Naive thymus-derived CD4-positive, alpha-beta T cell (primary cell): ENCODE measurements at regions of chr2 and their contacts with region 1.

Region 1: GRCh38 chr2:88055371-88056128 is at the start of gene KRCC1:
- DNase-seq: peak; percentile 91 to 95 (median 93)
- ATAC-seq: peak; percentile 96
- H3K4me3 ChIP-seq: peak within 1 kb of the TSS; percentile 75
- H3K4me3 Mint-ChIP-seq: peak within 1 kb of the TSS; percentile 89 to 97 (median 92)
- H3K27ac ChIP-seq: peak within 1 kb of the TSS; percentile 96
- H3K27ac Mint-ChIP-seq: peak within 1 kb of the TSS; percentile 92 to 100 (median 97)
- H3K4me1 ChIP-seq: peaks cover 13 to 26% of the 10 kb centered on the region in 2 donors
- H3K4me1 Mint-ChIP-seq: peaks cover 33 to 65% (median 54%) of the 10 kb centered on the region in 7 donors
- H3K27me3 ChIP-seq: no peaks in the 10 kb centered on the region
- H3K27me3 Mint-ChIP-seq: no peaks in the 10 kb centered on the region
- total RNA-seq, gene KRCC1: 7.1 to 33.9 (median 29.3) TPM

Region 2: GRCh38 chr2:86562922-86563649 is 1492.5 kb before region 1 on chr2 and contains the start of gene CHMP3:
- CTCF ChIA-PET with region 1: no interaction called
- POLR2A ChIA-PET with region 1: no interaction called
- intact Hi-C with region 1: loop called in 1 of 2 experiments (anchors 5 kb)
- DNase-seq: peak; percentile 95 to 98 (median 96)
- ATAC-seq: peak; percentile 94
- H3K4me3 ChIP-seq: peak within 1 kb of the TSS; percentile 72
- H3K4me3 Mint-ChIP-seq: peak within 1 kb of the TSS in 9 of 10 donors; percentile 95 to 99 (median 97)
- H3K27ac ChIP-seq: peak within 1 kb of the TSS; percentile 99
- H3K27ac Mint-ChIP-seq: peak within 1 kb of the TSS; percentile 96 to 100 (median 98)
- H3K4me1 ChIP-seq: peaks cover 11 to 25% of the 10 kb centered on the region in 2 donors
- H3K4me1 Mint-ChIP-seq: peaks cover 11 to 42% (median 29%) of the 10 kb centered on the region in 7 donors
- H3K27me3 ChIP-seq: no peaks in the 10 kb centered on the region
- H3K27me3 Mint-ChIP-seq: peaks cover 0 to 7% (median 0%) of the 10 kb centered on the region in 5 donors
- total RNA-seq, gene CHMP3: 39.9 to 103 (median 71.4) TPM

Region 3: GRCh38 chr2:88036182-88036581 is 19.4 kb before region 1 on chr2:
- CTCF ChIA-PET with region 1: interaction called, 8 read pairs
- POLR2A ChIA-PET with region 1: interaction called, 4 read pairs
- intact Hi-C with region 1: loop called in 1 of 2 experiments (anchors 2 kb)
- DNase-seq: no peak
- ATAC-seq: no peak
- H3K4me3 ChIP-seq: no peak overlapping the region
- H3K4me3 Mint-ChIP-seq: no peak overlapping the region
- H3K27ac ChIP-seq: no peak overlapping the region
- H3K27ac Mint-ChIP-seq: peak overlapping the region in 1 of 9 donors; percentile 48
- H3K4me1 ChIP-seq: no peaks in the 10 kb centered on the region
- H3K4me1 Mint-ChIP-seq: peaks cover 5 to 50% (median 34%) of the 10 kb centered on the region in 7 donors
- H3K27me3 ChIP-seq: no peaks in the 10 kb centered on the region
- H3K27me3 Mint-ChIP-seq: no peaks in the 10 kb centered on the region

Region 4: GRCh38 chr2:88187038-88187676 is 131.6 kb after region 1 on chr2:
- CTCF ChIA-PET with region 1: no interaction called
- POLR2A ChIA-PET with region 1: no interaction called
- intact Hi-C with region 1: loop called in 1 of 2 experiments (anchors 1 kb)
- DNase-seq: peak in 2 of 9 donors; percentile 12 to 39
- ATAC-seq: peak; percentile 32
- H3K4me3 ChIP-seq: no peak overlapping the region
- H3K4me3 Mint-ChIP-seq: no peak overlapping the region
- H3K27ac ChIP-seq: no peak overlapping the region
- H3K27ac Mint-ChIP-seq: no peak overlapping the region
- H3K4me1 ChIP-seq: peaks cover 0 to under 1% of the 10 kb centered on the region in 2 donors
- H3K4me1 Mint-ChIP-seq: peaks cover 12 to 28% (median 16%) of the 10 kb centered on the region in 7 donors
- H3K27me3 ChIP-seq: no peaks in the 10 kb centered on the region
- H3K27me3 Mint-ChIP-seq: peaks cover 3 to 10% (median 8%) of the 10 kb centered on the region in 5 donors

Region 5: DNA sequence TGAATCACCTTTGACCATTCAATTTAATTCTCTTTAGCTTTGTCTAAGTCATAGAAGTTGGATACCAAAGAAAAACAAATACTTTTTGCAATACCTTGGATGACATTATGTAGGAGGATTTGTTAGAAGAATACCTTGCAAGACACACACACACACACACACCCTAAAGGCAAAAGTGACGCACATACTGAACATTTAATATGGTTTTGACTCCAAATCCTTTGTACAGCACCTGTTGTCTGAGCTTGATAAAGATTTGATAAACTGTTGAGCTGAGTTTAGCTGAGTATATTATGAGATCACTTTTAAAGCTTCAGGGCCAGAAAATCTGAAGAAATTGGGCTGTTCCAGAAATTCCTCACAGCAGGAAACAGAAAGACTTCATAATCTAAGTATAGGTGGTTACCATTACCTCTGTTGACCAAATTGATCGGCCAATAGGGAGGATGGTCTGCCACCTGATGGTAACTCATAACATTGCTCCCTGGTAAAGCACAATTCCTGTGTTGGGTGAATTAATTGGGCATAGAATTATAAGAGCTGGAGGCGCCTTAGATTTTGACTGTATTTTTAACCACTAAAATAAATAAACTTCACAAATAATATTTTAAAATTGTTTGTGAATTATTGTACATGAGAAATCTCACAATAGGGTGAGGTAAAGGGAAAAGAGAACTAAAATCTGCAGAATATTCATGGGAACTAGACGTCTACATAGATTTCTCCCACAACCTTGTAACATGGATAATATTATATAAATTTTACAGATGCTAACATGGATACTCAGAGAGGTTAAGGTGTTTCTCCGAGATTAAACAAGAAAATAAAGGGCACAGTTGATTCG is 614.0 kb after region 1 on chr2:
- CTCF ChIA-PET with region 1: no interaction called
- POLR2A ChIA-PET with region 1: no interaction called
- intact Hi-C with region 1: loop called in 1 of 2 experiments (anchors 5 kb)
- DNase-seq: peak in 2 of 9 donors; percentile 11 to 18
- ATAC-seq: peak; percentile 73
- H3K4me3 ChIP-seq: no peak overlapping the region
- H3K4me3 Mint-ChIP-seq: no peak overlapping the region
- H3K27ac ChIP-seq: no peak overlapping the region
- H3K27ac Mint-ChIP-seq: no peak overlapping the region
- H3K4me1 ChIP-seq: no peaks in the 10 kb centered on the region
- H3K4me1 Mint-ChIP-seq: peaks cover 0 to 6% (median 0%) of the 10 kb centered on the region in 7 donors
- H3K27me3 ChIP-seq: no peaks in the 10 kb centered on the region
- H3K27me3 Mint-ChIP-seq: peaks cover 0 to 5% (median 0%) of the 10 kb centered on the region in 5 donors